ENCODE measurements at regions of chr13 and their contacts with region 1.

Region 1: DNA sequence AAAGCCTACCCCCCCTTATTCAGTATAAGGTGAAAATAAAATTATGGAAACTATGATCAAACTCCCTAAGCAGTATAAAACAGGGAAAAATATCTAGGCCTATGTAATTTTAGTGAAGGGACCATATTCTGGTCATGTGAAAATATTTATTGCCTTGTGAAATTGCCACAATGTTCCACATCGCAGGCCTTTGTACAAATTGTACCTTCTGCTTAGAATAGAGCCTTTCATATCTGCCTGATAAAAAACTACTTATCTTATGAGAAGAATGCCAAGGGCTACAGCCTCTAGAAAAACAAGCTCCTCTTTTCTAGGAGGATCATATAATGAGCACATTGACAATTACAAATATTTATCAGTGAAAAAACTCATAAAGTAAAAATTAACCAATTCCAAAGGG is 1280.0 kb downstream of the EFNB2 start:
- DNase-seq: no peak
- ATAC-seq: no peak
- H3K4me3 ChIP-seq: no peak overlapping the region
- H3K27ac ChIP-seq: no peak overlapping the region
- H3K4me1 ChIP-seq: no peaks in the 10 kb centered on the region
- H3K27me3 ChIP-seq: no peaks in the 10 kb centered on the region
- CTCF ChIP-seq: no peak

Region 2: GRCh38 chr13:104996022-104996421 is 259.4 kb before region 1 on chr13:
- CTCF ChIA-PET with region 1: no interaction called
- POLR2A ChIA-PET with region 1: interaction called, 10 read pairs
- in situ Hi-C with region 1: no loop called
- intact Hi-C with region 1: no loop called
- DNase-seq: no peak
- ATAC-seq: no peak
- H3K4me3 ChIP-seq: no peak overlapping the region
- H3K27ac ChIP-seq: no peak overlapping the region
- H3K4me1 ChIP-seq: no peaks in the 10 kb centered on the region
- H3K27me3 ChIP-seq: no peaks in the 10 kb centered on the region
- CTCF ChIP-seq: no peak

Region 3: GRCh38 chr13:105231579-105231978 is 23.9 kb before region 1 on chr13:
- CTCF ChIA-PET with region 1: no interaction called
- POLR2A ChIA-PET with region 1: no interaction called
- in situ Hi-C with region 1: no loop called
- intact Hi-C with region 1: no loop called
- DNase-seq: no peak
- ATAC-seq: no peak
- H3K4me3 ChIP-seq: no peak overlapping the region
- H3K27ac ChIP-seq: no peak overlapping the region
- H3K4me1 ChIP-seq: no peaks in the 10 kb centered on the region
- H3K27me3 ChIP-seq: no peaks in the 10 kb centered on the region
- CTCF ChIP-seq: no peak

Region 4: DNA sequence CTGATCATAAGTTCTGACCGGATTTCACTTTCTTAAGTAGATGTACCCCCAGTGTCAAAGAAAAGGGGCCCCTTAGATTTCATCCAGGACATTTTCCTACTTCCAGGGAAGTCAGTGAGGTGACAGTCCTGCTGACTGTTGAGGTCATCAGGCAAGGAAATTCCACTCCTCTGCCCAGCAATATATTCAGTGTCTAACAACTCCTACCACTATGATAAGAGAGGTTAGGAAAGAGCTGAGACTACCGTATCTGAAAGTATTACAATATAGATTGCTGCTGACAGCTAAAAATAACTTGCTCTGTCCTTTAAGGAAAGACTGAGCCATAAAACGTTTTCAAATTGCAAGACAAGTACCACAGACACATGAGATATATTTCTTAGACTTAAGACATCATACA is 954.9 kb after region 1 on chr13:
- CTCF ChIA-PET with region 1: no interaction called
- POLR2A ChIA-PET with region 1: no interaction called
- in situ Hi-C with region 1: no loop called
- intact Hi-C with region 1: no loop called
- DNase-seq: no peak
- ATAC-seq: no peak
- H3K4me3 ChIP-seq: no peak overlapping the region
- H3K27ac ChIP-seq: no peak overlapping the region
- H3K4me1 ChIP-seq: no peaks in the 10 kb centered on the region
- H3K27me3 ChIP-seq: no peaks in the 10 kb centered on the region
- CTCF ChIP-seq: no peak

Measured in Panc1 (cell line).